Mammary epithelial cell (primary cell): ENCODE measurements at regions of chr15 and their contacts with region 1.

Region 1: GRCh38 chr15:92118162-92118935 is 264.8 kb downstream of the SLCO3A1 start:
- DNase-seq: peak; percentile 32
- H3K4me3 ChIP-seq: no peak overlapping the region
- H3K27ac ChIP-seq: no peak overlapping the region
- H3K4me1 ChIP-seq: peaks cover 8% of the 10 kb centered on the region
- H3K27me3 ChIP-seq: no peaks in the 10 kb centered on the region
- CTCF ChIP-seq: no peak

Region 2: DNA sequence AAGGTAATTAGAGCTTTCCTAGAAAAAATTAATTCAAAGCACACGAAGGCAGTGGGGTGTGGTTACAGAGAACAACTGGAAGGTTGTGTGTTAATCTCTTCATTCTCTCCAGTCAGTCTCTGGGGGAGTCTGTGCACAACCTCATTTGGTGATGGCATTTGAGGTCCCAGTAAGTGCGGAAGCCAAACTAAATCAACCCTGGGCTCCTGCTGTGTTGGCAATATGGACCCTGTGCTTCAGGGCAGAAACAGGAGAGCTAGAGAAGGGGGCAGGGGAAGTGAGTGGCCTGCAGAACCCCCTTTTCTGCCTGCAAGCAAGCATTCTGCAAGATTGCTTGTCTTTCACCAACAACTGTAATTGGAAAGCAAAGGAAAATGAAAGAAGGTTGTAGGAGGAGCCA is 79.4 kb after region 1 on chr15:
- CTCF ChIA-PET with region 1: no interaction called
- dilution Hi-C with region 1: loop called (anchors 5 kb)
- in situ Hi-C with region 1: loop called in 1 of 2 experiments (anchors 25 kb)
- intact Hi-C with region 1: no loop called
- DNase-seq: no peak
- H3K4me3 ChIP-seq: no peak overlapping the region
- H3K27ac ChIP-seq: no peak overlapping the region
- H3K4me1 ChIP-seq: no peaks in the 10 kb centered on the region
- H3K27me3 ChIP-seq: no peaks in the 10 kb centered on the region
- CTCF ChIP-seq: no peak